ENCODE measurements at regions of chr17 and their contacts with region 1.

Region 1: GRCh38 chr17:59619293-59620063 is at the start of gene CLTC:
- DNase-seq: peak; percentile 97
- H3K4me3 Mint-ChIP-seq: peak within 1 kb of the TSS; percentile 91
- H3K27ac Mint-ChIP-seq: peak within 1 kb of the TSS; percentile 100
- H3K4me1 Mint-ChIP-seq: peaks cover 46% of the 10 kb centered on the region
- H3K27me3 Mint-ChIP-seq: peaks cover 2% of the 10 kb centered on the region
- total RNA-seq, gene CLTC: 187 and 190 TPM in 2 replicates

Region 2: GRCh38 chr17:59155439-59156182 is 463.9 kb before region 1 on chr17 and contains the start of gene PRR11:
- intact Hi-C with region 1: loop called (anchors 2 kb)
- DNase-seq: peak; percentile 98
- H3K4me3 Mint-ChIP-seq: no peak within 1 kb of the TSS
- H3K27ac Mint-ChIP-seq: no peak within 1 kb of the TSS
- H3K4me1 Mint-ChIP-seq: peaks cover 44% of the 10 kb centered on the region
- H3K27me3 Mint-ChIP-seq: no peaks in the 10 kb centered on the region
- total RNA-seq, gene PRR11: 29.7 and 32.6 TPM in 2 replicates

Region 3: DNA sequence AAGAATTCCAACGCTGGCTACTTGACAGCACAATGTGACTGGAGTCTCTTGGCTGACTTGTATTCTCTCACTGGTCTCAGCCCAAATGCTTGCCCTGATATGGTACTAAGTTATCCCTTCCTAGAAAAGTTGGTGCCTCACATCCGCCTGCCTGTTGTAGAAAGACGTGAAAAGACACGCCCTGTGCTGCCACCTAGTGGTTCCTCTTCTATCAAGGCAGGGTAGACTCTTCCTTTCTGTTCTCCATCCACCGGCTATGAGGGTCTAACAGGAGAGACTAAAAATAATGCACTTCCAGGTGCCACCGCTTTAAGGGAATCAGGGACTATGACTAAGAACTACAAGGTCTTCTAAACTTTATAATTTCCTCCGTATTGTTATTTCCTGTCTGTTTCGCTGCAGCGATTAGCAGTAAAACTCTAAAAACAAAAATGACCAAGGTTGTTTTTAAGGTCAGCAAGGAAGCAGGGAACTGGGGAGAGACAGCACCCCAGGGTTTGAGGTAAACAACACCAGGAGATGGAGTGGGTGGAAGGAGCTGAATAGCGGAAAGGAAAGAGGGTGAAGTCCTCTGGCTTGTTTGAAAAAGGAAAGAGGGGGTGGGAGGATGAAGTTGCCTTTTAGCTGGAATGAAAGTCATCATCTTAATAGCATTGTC is 178.6 kb before region 1 on chr17:
- intact Hi-C with region 1: loop called (anchors 2 kb)
- DNase-seq: peak; percentile 96
- H3K4me3 Mint-ChIP-seq: peak overlapping the region; percentile 78
- H3K27ac Mint-ChIP-seq: peak overlapping the region; percentile 95
- H3K4me1 Mint-ChIP-seq: peaks cover 49% of the 10 kb centered on the region
- H3K27me3 Mint-ChIP-seq: no peaks in the 10 kb centered on the region

Region 4: DNA sequence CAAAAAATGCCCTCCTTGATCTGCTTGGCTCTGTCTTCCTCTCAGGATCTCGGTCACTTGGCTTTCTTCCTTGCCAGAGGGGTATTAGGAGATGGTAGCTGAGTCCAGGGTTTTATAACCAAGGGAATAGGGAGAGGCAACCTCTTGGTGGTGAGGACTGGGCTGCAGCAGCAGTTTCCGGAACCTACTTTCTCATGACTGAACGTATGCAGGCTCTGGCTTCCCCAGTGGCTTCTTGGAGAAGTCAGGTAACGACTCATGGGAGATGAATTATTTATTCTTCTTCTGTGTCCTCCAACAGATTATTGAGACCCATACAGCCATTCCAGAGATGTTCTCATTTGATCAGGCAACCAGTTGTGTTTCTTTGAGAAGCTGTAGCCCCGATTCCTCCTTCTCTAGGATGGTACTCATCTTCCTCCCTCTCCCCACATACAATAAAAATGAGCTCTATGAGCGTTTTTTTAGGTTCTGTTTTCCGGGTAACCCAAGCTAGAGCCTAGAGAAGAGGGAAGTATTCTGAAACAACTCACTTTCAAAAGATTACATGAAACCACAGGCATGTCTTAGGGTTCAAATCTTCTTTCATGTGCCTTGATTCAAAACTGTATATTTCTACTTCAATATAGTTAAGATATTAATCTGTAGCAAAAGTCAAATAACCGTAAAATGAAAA is 76.4 kb before region 1 on chr17:
- intact Hi-C with region 1: no loop called
- DNase-seq: no peak
- H3K4me3 Mint-ChIP-seq: no peak overlapping the region
- H3K27ac Mint-ChIP-seq: no peak overlapping the region
- H3K4me1 Mint-ChIP-seq: no peaks in the 10 kb centered on the region
- H3K27me3 Mint-ChIP-seq: peaks cover 24% of the 10 kb centered on the region

Region 5: DNA sequence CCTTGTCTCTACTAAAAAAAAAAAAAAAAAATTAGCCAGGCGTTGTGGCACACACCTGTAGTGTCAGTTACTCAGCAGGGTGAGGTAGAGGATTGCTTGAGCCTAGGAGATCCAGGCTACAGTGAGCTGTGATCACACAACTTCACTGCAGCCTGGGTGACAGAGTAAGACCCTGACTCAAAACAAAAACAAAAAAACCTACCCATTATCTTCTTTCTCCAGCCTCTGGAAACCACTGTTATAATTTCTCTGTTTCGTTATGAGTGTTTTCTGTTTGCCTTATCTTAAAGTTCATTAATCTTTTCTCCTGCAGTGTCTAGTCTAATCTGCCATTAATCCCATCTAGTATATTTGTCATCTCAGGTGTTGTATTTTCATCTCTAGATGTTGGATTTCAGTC is 18.3 kb before region 1 on chr17:
- intact Hi-C with region 1: loop called (anchors 1 kb)
- DNase-seq: no peak
- H3K4me3 Mint-ChIP-seq: no peak overlapping the region
- H3K27ac Mint-ChIP-seq: peak overlapping the region; percentile 63
- H3K4me1 Mint-ChIP-seq: peaks cover 8% of the 10 kb centered on the region
- H3K27me3 Mint-ChIP-seq: no peaks in the 10 kb centered on the region

Region 6: GRCh38 chr17:59666235-59666634 is 46.8 kb after region 1 on chr17:
- intact Hi-C with region 1: no loop called
- DNase-seq: no peak
- H3K4me3 Mint-ChIP-seq: no peak overlapping the region
- H3K27ac Mint-ChIP-seq: no peak overlapping the region
- H3K4me1 Mint-ChIP-seq: peaks cover 23% of the 10 kb centered on the region
- H3K27me3 Mint-ChIP-seq: no peaks in the 10 kb centered on the region

Region 7: DNA sequence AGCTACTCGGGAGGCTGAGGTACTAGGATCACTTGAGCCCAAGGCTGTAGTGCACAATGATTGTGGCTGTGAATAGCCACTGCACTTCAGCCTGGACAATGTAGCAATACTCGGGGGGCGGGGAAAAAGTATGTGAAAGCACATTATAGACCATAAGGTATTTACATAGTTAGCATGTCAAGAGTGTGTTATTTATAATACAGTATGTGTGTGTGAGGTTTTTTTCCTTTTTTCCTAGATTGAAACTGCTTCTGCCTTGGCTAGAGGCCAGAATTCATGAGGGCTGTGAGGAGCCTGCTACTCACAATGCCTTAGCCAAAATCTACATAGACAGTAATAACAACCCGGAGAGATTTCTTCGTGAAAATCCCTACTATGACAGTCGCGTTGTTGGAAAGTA is 57.2 kb after region 1 on chr17:
- intact Hi-C with region 1: no loop called
- DNase-seq: no peak
- H3K4me3 Mint-ChIP-seq: no peak overlapping the region
- H3K27ac Mint-ChIP-seq: no peak overlapping the region
- H3K4me1 Mint-ChIP-seq: peaks cover 1% of the 10 kb centered on the region
- H3K27me3 Mint-ChIP-seq: no peaks in the 10 kb centered on the region

Region 8: DNA sequence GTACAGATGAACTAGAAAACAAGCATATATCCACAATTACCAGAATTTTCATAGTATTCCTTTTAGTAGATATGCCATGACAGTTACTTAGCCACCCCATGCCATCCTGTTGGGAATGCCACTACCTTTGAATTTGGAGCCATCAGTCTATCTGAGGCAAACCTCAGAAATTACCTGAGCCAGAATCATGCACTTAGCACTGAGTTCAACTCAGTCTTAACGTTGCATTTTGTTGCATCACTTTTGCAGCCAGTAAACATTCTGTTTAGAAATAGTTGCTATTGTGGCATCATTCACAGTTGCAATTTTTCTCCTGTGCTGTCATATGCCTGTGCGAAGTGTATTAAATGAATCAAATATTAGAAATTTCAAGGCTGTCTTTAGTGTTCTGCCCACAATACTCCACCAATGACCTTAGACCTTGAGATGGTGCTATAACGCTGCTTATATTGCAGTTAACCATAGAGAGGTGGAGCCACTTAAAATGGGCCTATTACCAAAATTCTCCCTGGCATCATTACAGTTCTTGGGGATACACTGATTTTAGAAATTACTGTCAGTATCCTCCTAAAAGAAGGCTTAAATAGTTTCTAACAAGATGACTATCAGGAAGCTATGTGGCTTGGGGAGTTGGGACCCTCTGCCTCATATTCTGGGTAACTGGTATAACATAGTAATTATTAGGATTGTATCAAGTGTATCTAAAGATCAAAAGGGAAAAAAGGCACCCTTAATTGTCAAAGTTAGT is 76.6 kb after region 1 on chr17:
- intact Hi-C with region 1: no loop called
- DNase-seq: no peak
- H3K4me3 Mint-ChIP-seq: no peak overlapping the region
- H3K27ac Mint-ChIP-seq: no peak overlapping the region
- H3K4me1 Mint-ChIP-seq: peaks cover 34% of the 10 kb centered on the region
- H3K27me3 Mint-ChIP-seq: no peaks in the 10 kb centered on the region

Region 9: GRCh38 chr17:59707114-59707970 is 87.9 kb after region 1 on chr17 and contains the starts of genes PTRH2 and VMP1:
- intact Hi-C with region 1: loop called (anchors 1 kb)
- DNase-seq: peak; percentile 98
- H3K4me3 Mint-ChIP-seq: peak within 1 kb of the TSS; percentile 91
- H3K27ac Mint-ChIP-seq: peak within 1 kb of the TSS; percentile 87
- H3K4me1 Mint-ChIP-seq: peaks cover 43% of the 10 kb centered on the region
- H3K27me3 Mint-ChIP-seq: no peaks in the 10 kb centered on the region
- total RNA-seq, gene PTRH2: 49.0 and 50.3 TPM in 2 replicates
- total RNA-seq, gene VMP1: 417 and 422 TPM in 2 replicates

Region 10: DNA sequence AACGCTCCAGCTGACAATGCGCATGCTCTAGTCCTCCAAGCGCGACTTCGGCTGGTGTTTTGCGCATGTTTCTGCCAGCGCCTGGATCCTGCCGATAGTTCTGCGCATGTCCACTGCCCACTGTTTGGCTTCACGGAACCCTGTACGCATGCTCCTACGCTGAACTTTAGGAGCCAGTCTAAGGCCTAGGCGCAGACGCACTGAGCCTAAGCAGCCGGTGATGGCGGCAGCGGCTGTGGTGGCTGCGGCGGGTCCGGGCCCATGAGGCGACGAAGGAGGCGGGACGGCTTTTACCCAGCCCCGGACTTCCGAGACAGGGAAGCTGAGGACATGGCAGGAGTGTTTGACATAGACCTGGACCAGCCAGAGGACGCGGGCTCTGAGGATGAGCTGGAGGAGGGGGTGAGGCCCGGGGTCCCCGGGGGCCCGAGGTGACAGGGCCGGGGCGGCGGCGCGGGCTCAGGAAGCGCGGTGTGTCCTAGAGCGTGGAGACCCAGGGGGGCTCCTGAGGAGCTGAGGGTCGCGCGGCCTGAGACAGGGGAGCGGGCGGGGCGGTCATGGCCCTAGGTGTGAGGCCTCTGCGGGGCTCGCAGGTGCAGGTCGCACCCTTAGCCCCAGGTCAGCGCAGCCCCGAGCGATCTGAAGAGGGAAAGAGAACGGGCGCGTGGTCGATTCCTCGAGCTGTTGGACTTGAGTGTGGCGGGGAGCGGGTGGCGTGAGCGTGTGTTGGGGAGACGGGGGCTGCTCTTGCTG is 273.6 kb after region 1 on chr17 and contains the starts of genes RPS6KB1 and TUBD1:
- intact Hi-C with region 1: loop called (anchors 5 kb)
- DNase-seq: peak; percentile 99
- H3K4me3 Mint-ChIP-seq: peak within 1 kb of the TSS; percentile 100
- H3K27ac Mint-ChIP-seq: peak within 1 kb of the TSS; percentile 100
- H3K4me1 Mint-ChIP-seq: peaks cover 40% of the 10 kb centered on the region
- H3K27me3 Mint-ChIP-seq: peaks cover 3% of the 10 kb centered on the region
- total RNA-seq, gene RPS6KB1: 64.0 and 66.4 TPM in 2 replicates
- total RNA-seq, gene TUBD1: 11.0 and 12.1 TPM in 2 replicates